GM10248 (cell line): ENCODE measurements at regions of chr3 and their contacts with region 1.

Region 1: DNA sequence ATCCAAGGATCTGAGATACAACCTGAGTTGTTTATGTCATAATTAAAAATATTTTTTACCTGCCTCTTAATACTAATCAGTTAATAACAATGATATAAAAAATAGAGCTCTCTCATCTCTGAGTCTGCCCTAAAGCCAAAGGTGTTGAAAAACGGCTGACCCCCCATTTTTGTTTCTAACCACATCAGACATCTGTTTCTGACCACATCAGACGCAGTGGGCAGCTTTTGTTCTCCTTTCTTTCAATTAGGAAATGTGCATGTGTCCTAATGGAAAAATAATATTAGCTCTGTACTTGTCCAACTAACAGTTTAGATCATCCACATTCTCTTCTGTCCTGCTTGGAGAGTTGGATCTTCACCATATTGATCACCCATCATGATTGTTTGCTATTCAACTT is 144.6 kb downstream of the SHOX2 start:
- DNase-seq: no peak
- CTCF ChIP-seq: no peak

Region 2: GRCh38 chr3:156396851-156397250 is 1564.8 kb before region 1 on chr3:
- CTCF ChIA-PET with region 1: no interaction called
- POLR2A ChIA-PET with region 1: no interaction called
- DNase-seq: no peak
- CTCF ChIP-seq: no peak

Region 3: GRCh38 chr3:157979022-157979421 is 17.4 kb after region 1 on chr3:
- CTCF ChIA-PET with region 1: interaction called, 11 read pairs
- POLR2A ChIA-PET with region 1: no interaction called
- DNase-seq: no peak
- CTCF ChIP-seq: no peak

Region 4: GRCh38 chr3:158185711-158186110 is 224.0 kb after region 1 on chr3:
- CTCF ChIA-PET with region 1: no interaction called
- POLR2A ChIA-PET with region 1: no interaction called
- DNase-seq: no peak
- CTCF ChIP-seq: no peak